ENCODE measurements at regions of chr20 and their contacts with region 1.

Region 1: DNA sequence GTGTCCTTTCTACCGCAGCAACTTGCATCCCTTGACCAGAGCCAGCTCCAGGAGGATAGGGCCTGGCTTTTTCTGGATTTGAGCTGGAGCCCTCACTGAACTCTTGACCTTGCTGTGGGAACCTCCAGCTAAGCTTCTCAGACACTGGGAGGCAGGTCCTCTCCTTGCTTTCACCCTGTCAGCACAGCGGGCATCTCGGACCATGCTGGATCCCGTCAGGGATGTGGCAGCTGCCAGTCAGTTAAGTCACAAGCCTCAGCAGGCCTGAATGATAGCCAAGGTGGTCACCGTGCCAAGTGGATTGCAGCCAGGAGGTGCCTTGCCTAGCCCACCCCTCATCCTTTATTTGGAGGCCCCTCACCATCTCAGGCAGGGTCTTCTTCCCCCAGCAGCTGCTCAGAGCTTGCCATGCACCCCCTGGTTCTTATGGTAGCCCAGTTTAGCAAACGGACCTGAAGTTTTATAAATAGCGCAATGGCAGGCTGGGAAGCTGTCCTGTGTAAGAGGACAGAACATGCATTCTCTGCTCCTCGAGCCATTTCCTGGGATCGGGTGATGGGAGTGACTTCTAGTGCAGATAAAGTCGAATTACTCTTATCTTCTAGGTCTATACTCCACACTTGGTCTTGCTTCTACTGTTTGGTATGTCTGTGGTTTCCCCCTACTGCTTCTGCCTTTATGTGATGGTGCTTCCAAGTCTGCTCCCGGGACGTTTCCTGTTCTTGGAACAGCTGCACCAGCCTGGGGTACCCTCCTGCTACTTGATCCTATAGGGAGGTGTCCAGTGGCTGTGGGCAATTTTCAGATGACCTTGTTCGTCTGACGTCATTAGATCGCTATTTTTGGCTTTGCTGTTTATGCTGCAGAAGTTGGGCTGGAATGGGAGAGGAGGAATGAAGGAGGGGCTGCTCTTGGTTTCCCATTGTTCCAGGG is 7.1 kb upstream of the MYLK2 start:
- DNase-seq: peak; percentile 93
- H3K4me3 ChIP-seq: no peak overlapping the region
- CTCF ChIP-seq: no peak

Region 2: GRCh38 chr20:31691646-31692275 is 120.3 kb before region 1 on chr20:
- in situ Hi-C with region 1: no loop called
- DNase-seq: no peak
- H3K4me3 ChIP-seq: no peak overlapping the region
- CTCF ChIP-seq: no peak

Region 3: GRCh38 chr20:31758521-31758920 is 53.5 kb before region 1 on chr20:
- in situ Hi-C with region 1: loop called (anchors 5 kb)
- DNase-seq: no peak
- H3K4me3 ChIP-seq: no peak overlapping the region
- CTCF ChIP-seq: no peak

Region 4: GRCh38 chr20:31890646-31891045 is 78.6 kb after region 1 on chr20:
- in situ Hi-C with region 1: no loop called
- DNase-seq: no peak
- H3K4me3 ChIP-seq: no peak overlapping the region
- CTCF ChIP-seq: no peak

Region 5: GRCh38 chr20:32206760-32207625 is 394.9 kb after region 1 on chr20:
- in situ Hi-C with region 1: no loop called
- DNase-seq: no peak
- H3K4me3 ChIP-seq: peak overlapping the region; percentile 91
- CTCF ChIP-seq: no peak